SK-N-SH (cell line): ENCODE measurements at regions of chr1 and their contacts with region 1.

Region 1: DNA sequence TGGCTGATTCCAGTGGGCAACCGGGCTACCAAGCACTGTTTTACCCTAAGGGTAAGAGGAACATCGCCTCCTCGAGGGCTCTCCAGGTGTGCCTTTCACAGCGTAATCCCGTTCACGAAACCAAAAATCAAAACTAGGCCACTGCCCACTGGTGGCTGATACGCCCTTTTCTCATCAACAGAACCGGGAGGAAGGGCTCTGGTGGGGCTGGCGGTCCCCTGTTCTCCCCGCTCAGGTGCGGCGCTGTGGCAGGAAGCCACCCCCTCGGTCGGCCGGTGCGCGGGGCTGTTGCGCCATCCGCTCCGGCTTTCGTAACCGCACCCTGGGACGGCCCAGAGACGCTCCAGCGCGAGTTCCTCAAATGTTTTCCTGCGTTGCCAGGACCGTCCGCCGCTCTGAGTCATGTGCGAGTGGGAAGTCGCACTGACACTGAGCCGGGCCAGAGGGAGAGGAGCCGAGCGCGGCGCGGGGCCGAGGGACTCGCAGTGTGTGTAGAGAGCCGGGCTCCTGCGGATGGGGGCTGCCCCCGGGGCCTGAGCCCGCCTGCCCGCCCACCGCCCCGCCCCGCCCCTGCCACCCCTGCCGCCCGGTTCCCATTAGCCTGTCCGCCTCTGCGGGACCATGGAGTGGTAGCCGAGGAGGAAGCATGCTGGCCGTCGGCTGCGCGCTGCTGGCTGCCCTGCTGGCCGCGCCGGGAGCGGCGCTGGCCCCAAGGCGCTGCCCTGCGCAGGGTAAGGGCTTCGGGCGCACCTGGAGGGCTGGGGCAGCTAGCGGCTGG is at the start of gene IL6R:
- DNase-seq: peak; percentile 78
- H3K4me3 ChIP-seq: peak within 1 kb of the TSS; percentile 55 to 76
- H3K27ac ChIP-seq: peak within 1 kb of the TSS in 1 of 2 experiments; percentile 81; a peak in 2 of 4 replicates
- H3K4me1 ChIP-seq: peaks cover 3 to 12% of the 10 kb centered on the region in 2 experiments; a peak in 2 of 4 replicates
- H3K27me3 ChIP-seq: no peaks in the 10 kb centered on the region
- CTCF ChIP-seq: peak; percentile 61
- EP300 ChIP-seq: no peak
- RAD21 ChIP-seq: peak; percentile 43
- polyA plus RNA-seq, gene IL6R: 1.4 and 2.8 TPM in 2 replicates

Region 2: GRCh38 chr1:154386643-154387352 is 18.4 kb before region 1 on chr1:
- CTCF ChIA-PET with region 1: no interaction called
- POLR2A ChIA-PET with region 1: no interaction called
- DNase-seq: no peak
- H3K4me3 ChIP-seq: no peak overlapping the region
- H3K27ac ChIP-seq: no peak overlapping the region
- H3K4me1 ChIP-seq: no peaks in the 10 kb centered on the region
- H3K27me3 ChIP-seq: no peaks in the 10 kb centered on the region
- CTCF ChIP-seq: no peak
- EP300 ChIP-seq: no peak
- RAD21 ChIP-seq: no peak

Region 3: GRCh38 chr1:154419620-154420571 is 14.7 kb after region 1 on chr1:
- CTCF ChIA-PET with region 1: interaction called, 16 read pairs
- POLR2A ChIA-PET with region 1: no interaction called
- DNase-seq: peak; percentile 46
- H3K4me3 ChIP-seq: peak overlapping the region in 1 of 2 experiments; percentile 51; a peak in 2 of 4 replicates
- H3K27ac ChIP-seq: peak overlapping the region; percentile 66 to 99; a peak in 3 of 4 replicates
- H3K4me1 ChIP-seq: peaks cover 11 to 48% of the 10 kb centered on the region in 2 experiments; a peak in 3 of 4 replicates
- H3K27me3 ChIP-seq: no peaks in the 10 kb centered on the region
- CTCF ChIP-seq: no peak
- EP300 ChIP-seq: 0 out of 4 replicates have a peak, but pooled peaks of 1 of the 2 experiments have one; percentile 23
- RAD21 ChIP-seq: no peak